Activated CD8-positive, alpha-beta T cell treated with anti-CD3 and anti-CD28 coated beads for 36 hours (primary cell): ENCODE measurements at regions of chr16 and their contacts with region 1.

Region 1: DNA sequence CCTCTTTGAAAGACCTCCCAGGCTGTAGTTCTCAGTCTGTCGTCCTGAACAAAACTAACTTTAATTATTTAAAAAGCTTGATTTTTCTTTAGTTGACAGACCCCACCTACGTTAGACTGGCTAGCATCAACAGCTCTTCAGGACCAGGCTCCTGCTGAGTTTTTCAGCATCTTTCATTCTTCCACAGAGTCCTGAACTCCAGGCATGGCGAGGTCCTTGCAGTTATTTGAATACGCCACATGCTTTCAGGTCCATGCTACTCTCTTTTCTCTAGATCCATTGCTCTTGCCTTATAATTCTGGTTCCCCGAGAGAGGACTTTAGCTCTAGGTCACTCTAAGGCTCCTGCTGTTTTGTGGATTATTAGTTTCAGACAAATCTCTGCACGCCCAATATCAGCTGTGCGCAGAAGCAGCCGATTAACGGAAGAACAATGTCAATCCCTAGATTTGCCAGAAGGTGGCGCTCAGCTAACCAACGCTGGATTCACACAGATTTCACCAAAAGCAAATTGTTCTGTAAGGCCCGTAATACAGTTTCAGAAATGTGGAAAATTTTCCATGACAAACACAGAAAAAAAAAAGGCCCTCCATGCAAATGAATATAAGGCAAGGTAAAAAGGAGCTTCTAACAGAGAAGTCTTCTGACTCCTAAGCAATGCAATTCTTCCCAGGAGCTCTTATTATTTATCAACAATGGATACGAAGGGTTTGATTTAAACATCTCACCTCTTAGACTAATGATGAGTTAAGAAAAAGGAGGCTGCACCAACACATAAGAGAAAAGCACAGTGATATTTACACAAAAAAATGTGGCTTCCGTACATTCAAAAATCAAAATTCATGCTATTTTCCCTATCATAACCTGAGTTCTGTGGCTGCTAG is 33.5 kb upstream of the BCO1 start:
- DNase-seq: peak; percentile 33
- ATAC-seq: peak; percentile 47
- H3K4me3 Mint-ChIP-seq: no peak overlapping the region
- H3K27ac Mint-ChIP-seq: no peak overlapping the region
- H3K4me1 Mint-ChIP-seq: no peaks in the 10 kb centered on the region
- H3K27me3 Mint-ChIP-seq: peaks cover 10% of the 10 kb centered on the region
- CTCF ChIP-seq: peak; percentile 81

Region 2: DNA sequence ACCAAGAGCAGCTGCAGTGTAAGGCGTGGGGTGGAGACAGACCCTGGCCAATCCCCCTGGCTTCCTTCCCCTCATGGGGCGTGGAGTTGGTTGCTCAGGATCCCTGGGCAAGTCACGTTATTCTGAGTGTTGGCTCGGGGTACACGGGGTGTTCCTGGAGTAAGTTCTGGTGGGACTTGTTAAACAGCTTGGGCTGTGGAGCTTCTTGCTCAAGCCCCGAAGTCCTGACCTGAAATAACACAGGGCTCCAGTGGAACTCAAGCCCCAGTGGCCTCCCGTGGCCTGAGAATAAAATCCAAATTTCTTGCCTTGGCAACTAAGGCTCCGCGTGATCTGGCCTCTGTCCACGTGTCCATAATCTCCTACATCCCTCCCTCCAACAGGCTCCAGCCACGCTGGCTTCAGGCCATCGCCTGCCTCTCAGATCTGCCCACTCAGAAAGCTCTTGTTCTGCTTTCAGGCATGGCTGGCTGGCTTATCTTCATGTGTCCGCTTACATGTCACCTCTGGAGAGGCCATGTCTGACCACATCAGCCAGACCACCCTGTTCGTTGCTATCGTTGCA is 15.9 kb before region 1 on chr16:
- CTCF ChIA-PET with region 1: interaction called, 12 read pairs
- POLR2A ChIA-PET with region 1: interaction called, 3 read pairs
- intact Hi-C with region 1: no loop called
- DNase-seq: no peak
- ATAC-seq: no peak
- H3K4me3 Mint-ChIP-seq: no peak overlapping the region
- H3K27ac Mint-ChIP-seq: no peak overlapping the region
- H3K4me1 Mint-ChIP-seq: peaks cover 3% of the 10 kb centered on the region
- H3K27me3 Mint-ChIP-seq: peaks cover 3% of the 10 kb centered on the region
- CTCF ChIP-seq: no peak

Region 3: GRCh38 chr16:81216706-81217105 is 11.7 kb after region 1 on chr16:
- CTCF ChIA-PET with region 1: interaction called, 12 read pairs
- POLR2A ChIA-PET with region 1: no interaction called
- intact Hi-C with region 1: no loop called
- DNase-seq: no peak
- ATAC-seq: no peak
- H3K4me3 Mint-ChIP-seq: no peak overlapping the region
- H3K27ac Mint-ChIP-seq: no peak overlapping the region
- H3K4me1 Mint-ChIP-seq: no peaks in the 10 kb centered on the region
- H3K27me3 Mint-ChIP-seq: peaks cover 3% of the 10 kb centered on the region
- CTCF ChIP-seq: no peak

Region 4: GRCh38 chr16:81238296-81239011 is 33.4 kb after region 1 on chr16 and contains the start of gene BCO1:
- CTCF ChIA-PET with region 1: interaction called, 12 read pairs
- POLR2A ChIA-PET with region 1: no interaction called
- intact Hi-C with region 1: no loop called
- DNase-seq: no peak
- ATAC-seq: no peak
- H3K4me3 Mint-ChIP-seq: no peak within 1 kb of the TSS
- H3K27ac Mint-ChIP-seq: no peak within 1 kb of the TSS
- H3K4me1 Mint-ChIP-seq: peaks cover 7% of the 10 kb centered on the region
- H3K27me3 Mint-ChIP-seq: no peaks in the 10 kb centered on the region
- CTCF ChIP-seq: no peak
- total RNA-seq, gene BCO1: not detected

Region 5: GRCh38 chr16:81261049-81261648 is 56.1 kb after region 1 on chr16:
- CTCF ChIA-PET with region 1: interaction called, 16 read pairs
- POLR2A ChIA-PET with region 1: no interaction called
- intact Hi-C with region 1: no loop called
- DNase-seq: peak; percentile 53
- ATAC-seq: peak; percentile 55
- H3K4me3 Mint-ChIP-seq: no peak overlapping the region
- H3K27ac Mint-ChIP-seq: no peak overlapping the region
- H3K4me1 Mint-ChIP-seq: no peaks in the 10 kb centered on the region
- H3K27me3 Mint-ChIP-seq: peaks cover 4% of the 10 kb centered on the region
- CTCF ChIP-seq: peak; percentile 71